ENCODE measurements at regions of chr5 and their contacts with region 1.

Region 1: GRCh38 chr5:131165119-131165727 is at the start of gene HINT1:
- DNase-seq: peak; percentile 90
- H3K4me3 ChIP-seq: peak within 1 kb of the TSS; percentile 76 to 77
- H3K27ac ChIP-seq: peak within 1 kb of the TSS; percentile 95 to 96
- H3K4me1 ChIP-seq: peaks cover 4% of the 10 kb centered on the region
- H3K27me3 ChIP-seq: no peaks in the 10 kb centered on the region
- CTCF ChIP-seq: peak in 3 of 4 experiments; percentile 30 to 38 (median 35)
- POLR2A ChIP-seq: peak; percentile 80
- total RNA-seq, gene HINT1: 121 to 328 TPM

Region 2: GRCh38 chr5:131263648-131264450 is 98.6 kb after region 1 on chr5 and contains the start of gene CDC42SE2:
- intact Hi-C with region 1: loop called (anchors 2 kb)
- DNase-seq: peak; percentile 80
- H3K4me3 ChIP-seq: peak within 1 kb of the TSS; percentile 88 to 99
- H3K27ac ChIP-seq: peak within 1 kb of the TSS; percentile 92 to 93
- H3K4me1 ChIP-seq: peaks cover 7% of the 10 kb centered on the region
- H3K27me3 ChIP-seq: no peaks in the 10 kb centered on the region
- CTCF ChIP-seq: peak in 2 of 4 experiments; percentile 9 to 26
- POLR2A ChIP-seq: peak; percentile 98
- total RNA-seq, gene CDC42SE2: 51.0 to 63.5 TPM

Region 3: GRCh38 chr5:131417240-131417869 is 252.1 kb after region 1 on chr5:
- intact Hi-C with region 1: loop called (anchors 10 kb)
- DNase-seq: peak; percentile 71
- H3K4me3 ChIP-seq: no peak overlapping the region
- H3K27ac ChIP-seq: no peak overlapping the region
- H3K4me1 ChIP-seq: no peaks in the 10 kb centered on the region
- H3K27me3 ChIP-seq: no peaks in the 10 kb centered on the region
- CTCF ChIP-seq: peak; percentile 61 to 92 (median 76)
- POLR2A ChIP-seq: no peak

Region 4: DNA sequence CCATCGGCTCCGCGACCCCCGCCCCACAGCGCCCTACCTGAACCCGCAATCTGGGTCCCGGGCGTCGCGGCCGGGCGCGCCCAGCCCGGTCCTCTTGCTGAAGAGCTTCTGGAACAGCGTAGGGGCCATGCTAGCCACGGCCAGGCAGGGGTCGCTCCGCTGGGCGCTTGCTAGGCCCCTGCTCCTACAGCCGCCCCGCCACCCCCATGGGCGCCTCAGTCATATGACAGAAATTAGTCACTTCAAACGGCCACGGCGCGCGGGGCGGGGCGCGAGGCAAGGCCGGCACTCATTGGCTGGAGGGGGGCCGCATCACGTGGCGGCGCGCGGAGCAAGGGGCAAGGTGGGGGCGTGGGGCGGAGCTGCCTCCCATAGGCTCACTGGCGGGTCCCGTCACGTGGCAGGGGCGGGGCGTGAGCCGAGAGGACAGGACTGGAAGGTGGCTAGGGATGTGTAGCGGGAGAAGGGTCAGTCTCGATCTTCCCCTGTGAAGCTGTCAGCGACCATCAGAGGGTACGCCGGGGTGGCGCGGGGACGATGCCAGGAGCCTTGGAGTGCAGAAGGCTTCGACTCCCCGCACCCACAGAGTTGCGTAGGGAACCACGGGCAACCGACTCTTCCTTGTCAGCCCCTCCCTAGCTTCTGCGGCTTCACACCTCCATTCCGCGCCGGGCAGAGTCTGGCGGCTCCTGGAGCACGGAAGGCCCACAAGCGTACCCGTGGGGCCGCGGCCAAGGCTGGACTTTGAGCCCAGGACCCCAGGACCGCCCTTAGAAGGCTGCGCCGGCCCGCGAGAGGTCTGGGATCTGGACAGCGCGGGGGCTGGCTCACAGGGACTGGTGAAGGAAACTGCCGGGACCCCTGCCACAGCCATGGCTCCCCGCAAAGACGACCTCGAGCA is 631.8 kb after region 1 on chr5 and contains the start of gene FNIP1:
- intact Hi-C with region 1: loop called (anchors 10 kb)
- DNase-seq: peak; percentile 100
- H3K4me3 ChIP-seq: peak within 1 kb of the TSS; percentile 96 to 97
- H3K27ac ChIP-seq: peak within 1 kb of the TSS; percentile 100
- H3K4me1 ChIP-seq: no peaks in the 10 kb centered on the region
- H3K27me3 ChIP-seq: no peaks in the 10 kb centered on the region
- CTCF ChIP-seq: peak in 1 of 4 experiments; percentile 21
- POLR2A ChIP-seq: peak; percentile 96
- total RNA-seq, gene FNIP1: 44.1 to 49.5 TPM